Activated T-helper 1 cell treated with anti-CD3 and anti-CD28 coated beads, Interleukin-12 subunit alpha, Interleukin-12 subunit beta, Interleukin-2, Interleukin-4 antibody, amounts not matched to agents 30 ng/mL and 10 ng/mL and 1 ng/mL, durations not matched to agents 14 hours and 24 hours and 36 hours (primary cell): ENCODE measurements at regions of chr22 and their contacts with region 1.

Region 1: GRCh38 chr22:35399678-35400334 is at the start of gene MCM5:
- DNase-seq: peak; percentile 97
- H3K4me3 Mint-ChIP-seq: peak within 1 kb of the TSS; percentile 97
- H3K27ac Mint-ChIP-seq: peak within 1 kb of the TSS; percentile 96
- H3K4me1 Mint-ChIP-seq: peaks cover 35% of the 10 kb centered on the region
- H3K27me3 Mint-ChIP-seq: no peaks in the 10 kb centered on the region
- total RNA-seq, gene MCM5: 297 and 307 TPM in 2 replicates

Region 2: GRCh38 chr22:35299673-35300497 is 99.9 kb before region 1 on chr22 and contains the start of gene TOM1:
- intact Hi-C with region 1: loop called (anchors 2 kb)
- DNase-seq: peak; percentile 95
- H3K4me3 Mint-ChIP-seq: peak within 1 kb of the TSS; percentile 91
- H3K27ac Mint-ChIP-seq: peak within 1 kb of the TSS; percentile 97
- H3K4me1 Mint-ChIP-seq: peaks cover 30% of the 10 kb centered on the region
- H3K27me3 Mint-ChIP-seq: peaks cover 7% of the 10 kb centered on the region
- total RNA-seq, gene TOM1: 16.8 and 19.0 TPM in 2 replicates

Region 3: GRCh38 chr22:35313311-35314121 is 86.3 kb before region 1 on chr22:
- intact Hi-C with region 1: no loop called
- DNase-seq: no peak
- H3K4me3 Mint-ChIP-seq: no peak overlapping the region
- H3K27ac Mint-ChIP-seq: peak overlapping the region; percentile 69
- H3K4me1 Mint-ChIP-seq: peaks cover 62% of the 10 kb centered on the region
- H3K27me3 Mint-ChIP-seq: no peaks in the 10 kb centered on the region

Region 4: GRCh38 chr22:35357883-35358621 is 41.8 kb before region 1 on chr22:
- intact Hi-C with region 1: no loop called
- DNase-seq: no peak
- H3K4me3 Mint-ChIP-seq: no peak overlapping the region
- H3K27ac Mint-ChIP-seq: no peak overlapping the region
- H3K4me1 Mint-ChIP-seq: no peaks in the 10 kb centered on the region
- H3K27me3 Mint-ChIP-seq: peaks cover 9% of the 10 kb centered on the region

Region 5: GRCh38 chr22:35380547-35381423 is 19.0 kb before region 1 on chr22 and contains the start of gene HMOX1:
- intact Hi-C with region 1: loop called (anchors 2 kb)
- DNase-seq: peak; percentile 47
- H3K4me3 Mint-ChIP-seq: peak within 1 kb of the TSS; percentile 58
- H3K27ac Mint-ChIP-seq: no peak within 1 kb of the TSS
- H3K4me1 Mint-ChIP-seq: peaks cover 21% of the 10 kb centered on the region
- H3K27me3 Mint-ChIP-seq: peaks cover 28% of the 10 kb centered on the region
- total RNA-seq, gene HMOX1: 1.6 and 2.0 TPM in 2 replicates

Region 6: GRCh38 chr22:35418088-35418487 is 18.3 kb after region 1 on chr22:
- intact Hi-C with region 1: no loop called
- DNase-seq: no peak
- H3K4me3 Mint-ChIP-seq: no peak overlapping the region
- H3K27ac Mint-ChIP-seq: no peak overlapping the region
- H3K4me1 Mint-ChIP-seq: no peaks in the 10 kb centered on the region
- H3K27me3 Mint-ChIP-seq: no peaks in the 10 kb centered on the region

Region 7: GRCh38 chr22:36986242-36986821 is 1586.5 kb after region 1 on chr22:
- intact Hi-C with region 1: no loop called
- DNase-seq: no peak
- H3K4me3 Mint-ChIP-seq: no peak overlapping the region
- H3K27ac Mint-ChIP-seq: no peak overlapping the region
- H3K4me1 Mint-ChIP-seq: peaks cover 4% of the 10 kb centered on the region
- H3K27me3 Mint-ChIP-seq: peaks cover 28% of the 10 kb centered on the region